ENCODE measurements at regions of chrX and their contacts with region 1.

Region 1: GRCh38 chrX:36787752-36788151 is 220.4 kb upstream of the FAM47C start:
- DNase-seq: no peak
- ATAC-seq: no peak
- H3K4me3 ChIP-seq: no peak overlapping the region
- H3K4me3 Mint-ChIP-seq: no peak overlapping the region
- H3K27ac ChIP-seq: no peak overlapping the region
- H3K27ac Mint-ChIP-seq: no peak overlapping the region
- H3K4me1 ChIP-seq: no peaks in the 10 kb centered on the region
- H3K4me1 Mint-ChIP-seq: no peaks in the 10 kb centered on the region
- H3K27me3 ChIP-seq: no peaks in the 10 kb centered on the region
- H3K27me3 Mint-ChIP-seq: no peaks in the 10 kb centered on the region
- CTCF ChIP-seq: no peak

Region 2: DNA sequence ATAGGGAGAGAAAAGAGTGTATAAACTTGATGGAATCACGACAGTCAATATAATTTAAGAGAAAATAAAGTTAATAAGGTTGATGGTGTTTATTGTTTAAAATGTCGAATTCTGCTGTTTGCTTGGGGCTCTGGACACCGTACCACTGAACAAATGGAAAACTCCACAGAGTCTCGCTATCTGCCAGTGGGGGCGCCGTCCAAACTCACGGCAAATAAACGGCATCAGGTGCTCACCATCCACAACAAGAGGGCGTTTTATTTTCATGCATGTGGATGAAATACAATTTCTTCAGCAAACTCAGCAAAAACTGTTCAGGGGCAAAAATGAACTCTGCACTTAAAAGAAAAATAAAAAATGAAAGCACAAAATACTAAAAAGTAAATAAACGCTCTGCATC is 173.8 kb after region 1 on chrX:
- CTCF ChIA-PET with region 1: no interaction called
- POLR2A ChIA-PET with region 1: no interaction called
- intact Hi-C with region 1: no loop called
- DNase-seq: no peak
- ATAC-seq: no peak
- H3K4me3 ChIP-seq: no peak overlapping the region
- H3K4me3 Mint-ChIP-seq: no peak overlapping the region
- H3K27ac ChIP-seq: no peak overlapping the region
- H3K27ac Mint-ChIP-seq: no peak overlapping the region
- H3K4me1 ChIP-seq: no peaks in the 10 kb centered on the region
- H3K4me1 Mint-ChIP-seq: no peaks in the 10 kb centered on the region
- H3K27me3 ChIP-seq: no peaks in the 10 kb centered on the region
- H3K27me3 Mint-ChIP-seq: peaks cover 20% of the 10 kb centered on the region
- CTCF ChIP-seq: no peak

Region 3: DNA sequence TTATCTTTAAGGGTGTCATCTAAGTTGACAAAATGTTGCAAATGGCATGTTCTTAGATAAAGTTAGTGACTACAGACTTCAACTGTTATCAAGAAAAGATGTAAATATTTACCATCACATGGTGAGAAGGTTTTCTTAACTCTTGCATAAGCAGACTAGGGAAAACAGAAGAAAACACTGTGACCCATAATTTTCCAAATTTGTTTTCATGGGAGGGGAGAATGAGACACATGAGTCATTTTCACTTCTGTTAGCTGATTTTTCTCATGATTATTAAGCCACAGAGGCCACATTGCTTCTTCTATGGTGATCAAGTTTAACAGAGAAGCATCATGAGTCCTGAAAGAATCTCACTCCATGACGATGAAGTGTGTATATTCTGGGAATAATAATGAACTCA is 1188.4 kb after region 1 on chrX:
- CTCF ChIA-PET with region 1: no interaction called
- POLR2A ChIA-PET with region 1: no interaction called
- intact Hi-C with region 1: loop called in 1 of 2 experiments (anchors 10 kb)
- DNase-seq: no peak
- ATAC-seq: no peak
- H3K4me3 ChIP-seq: no peak overlapping the region
- H3K4me3 Mint-ChIP-seq: no peak overlapping the region
- H3K27ac ChIP-seq: no peak overlapping the region
- H3K27ac Mint-ChIP-seq: no peak overlapping the region
- H3K4me1 ChIP-seq: no peaks in the 10 kb centered on the region
- H3K4me1 Mint-ChIP-seq: no peaks in the 10 kb centered on the region
- H3K27me3 ChIP-seq: no peaks in the 10 kb centered on the region
- H3K27me3 Mint-ChIP-seq: peaks cover 8% of the 10 kb centered on the region
- CTCF ChIP-seq: no peak

Measured in CD8-positive, alpha-beta T cell (primary cell).